WTC11 (cell line): ENCODE measurements at regions of chr1 and their contacts with region 1.

Region 1: GRCh38 chr1:157138220-157139051 is at the start of gene ETV3:
- DNase-seq: peak; percentile 86
- ATAC-seq: peak; percentile 77
- H3K4me3 Mint-ChIP-seq: peak within 1 kb of the TSS; percentile 94
- H3K27ac Mint-ChIP-seq: peak within 1 kb of the TSS; percentile 97
- H3K4me1 Mint-ChIP-seq: peaks cover 56% of the 10 kb centered on the region
- H3K27me3 Mint-ChIP-seq: peaks cover 6% of the 10 kb centered on the region
- CTCF ChIP-seq: no peak
- total RNA-seq, gene ETV3: 21.3 to 26.0 TPM (median 22.1 TPM) in 3 replicates

Region 2: DNA sequence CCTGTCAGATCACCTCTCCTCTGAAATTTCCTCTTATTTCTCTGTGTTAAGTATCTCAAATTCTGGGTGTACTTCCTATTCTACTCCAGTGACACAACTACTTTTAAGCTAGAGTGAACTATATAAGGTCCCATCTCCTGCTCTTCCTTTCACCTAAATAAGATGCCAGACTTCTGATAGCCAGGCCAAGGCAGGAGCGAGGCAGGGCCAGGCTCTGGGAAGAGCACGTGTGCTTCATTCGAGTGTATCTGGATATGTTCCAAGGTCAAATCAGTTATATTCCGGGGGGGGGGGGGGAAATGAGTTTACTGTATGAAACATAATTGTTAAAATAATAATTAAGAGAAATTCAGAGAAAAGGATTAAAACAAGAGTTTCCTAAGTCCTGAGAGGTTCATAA is 157.9 kb before region 1 on chr1:
- CTCF ChIA-PET with region 1: no interaction called
- POLR2A ChIA-PET with region 1: interaction called, 10 read pairs
- DNase-seq: no peak
- ATAC-seq: no peak
- H3K4me3 Mint-ChIP-seq: no peak overlapping the region
- H3K27ac Mint-ChIP-seq: no peak overlapping the region
- H3K4me1 Mint-ChIP-seq: peaks cover 11% of the 10 kb centered on the region
- H3K27me3 Mint-ChIP-seq: no peaks in the 10 kb centered on the region
- CTCF ChIP-seq: no peak

Region 3: DNA sequence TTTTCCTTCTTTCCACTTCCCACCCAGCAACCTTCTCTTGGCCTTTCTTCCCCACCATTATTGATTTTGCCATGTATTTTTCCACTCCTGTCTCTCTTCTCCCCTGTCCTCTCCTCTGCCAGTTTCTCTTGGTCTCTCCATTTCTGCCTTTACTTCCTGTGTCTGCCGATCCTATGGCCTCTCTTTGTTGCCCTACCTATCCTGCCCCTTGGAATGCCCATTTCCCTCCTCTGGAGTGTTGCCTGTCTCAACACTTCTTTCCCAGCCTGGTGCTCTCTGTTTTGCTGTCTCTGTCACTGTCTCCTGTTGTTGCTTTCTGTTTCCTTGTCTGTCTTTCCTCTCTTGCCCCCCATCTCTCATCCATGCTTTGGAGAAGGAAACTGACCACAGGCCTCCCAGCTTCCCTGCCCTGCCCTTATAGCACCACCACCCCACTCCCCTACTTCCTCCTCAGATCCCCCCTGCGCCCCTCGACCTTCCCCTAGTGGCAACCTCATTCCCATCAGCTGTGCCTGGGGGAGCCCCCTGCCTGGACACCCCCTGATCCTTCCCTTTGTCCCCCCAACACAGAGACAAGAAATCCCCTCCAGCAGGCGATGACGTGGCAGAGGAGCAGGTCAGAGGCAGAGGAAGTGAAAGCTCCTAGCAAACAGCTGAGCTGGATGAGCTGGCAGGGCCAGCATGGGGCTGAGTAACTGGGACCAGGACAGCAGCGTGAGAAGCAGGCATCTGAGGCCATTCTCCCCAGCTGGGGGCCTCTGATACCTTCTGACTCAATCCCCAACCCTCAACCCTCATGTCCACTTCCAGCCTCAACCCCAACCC is 32.2 kb before region 1 on chr1:
- CTCF ChIA-PET with region 1: no interaction called
- POLR2A ChIA-PET with region 1: no interaction called
- DNase-seq: no peak
- ATAC-seq: no peak
- H3K4me3 Mint-ChIP-seq: no peak overlapping the region
- H3K27ac Mint-ChIP-seq: no peak overlapping the region
- H3K4me1 Mint-ChIP-seq: peaks cover 29% of the 10 kb centered on the region
- H3K27me3 Mint-ChIP-seq: peaks cover 35% of the 10 kb centered on the region
- CTCF ChIP-seq: no peak